IMR-90 (cell line): ENCODE measurements at regions of chr5 and their contacts with region 1.

Region 1: DNA sequence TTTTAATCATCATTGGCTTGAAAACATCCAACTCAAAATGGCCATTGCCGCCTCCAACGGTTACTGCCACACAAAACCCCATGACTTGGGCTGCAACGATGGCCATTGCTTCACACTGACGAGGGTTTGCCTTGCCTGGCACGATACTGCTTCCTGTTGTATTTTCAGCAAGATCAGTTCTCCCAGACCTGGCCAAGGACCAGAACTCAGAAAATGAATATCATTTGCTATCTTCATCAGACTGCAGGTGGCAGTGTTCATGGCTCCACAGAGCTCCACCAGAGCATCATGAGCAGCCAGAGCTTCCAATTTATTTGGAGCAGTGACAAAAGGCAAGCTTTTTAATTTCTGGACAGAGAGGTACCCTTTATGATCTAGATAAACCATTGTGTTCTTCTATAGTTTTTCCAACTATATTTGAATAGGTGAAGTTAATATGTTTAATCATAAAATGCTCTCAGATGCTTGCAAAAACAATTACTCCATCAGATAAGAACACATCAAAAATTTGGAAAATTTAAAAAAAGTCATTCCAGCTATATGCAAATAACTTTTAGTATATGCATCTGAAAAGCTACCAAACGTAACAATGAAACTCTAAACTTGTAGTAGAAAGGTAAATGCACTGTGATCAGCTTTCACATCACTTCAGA is 10.4 kb downstream of the AMACR start:
- DNase-seq: peak; percentile 88
- ATAC-seq: peak; percentile 81
- H3K4me3 ChIP-seq: no peak overlapping the region
- H3K27ac ChIP-seq: no peak overlapping the region
- H3K4me1 ChIP-seq: peaks cover 8% of the 10 kb centered on the region; the same call in 1 of the 2 replicates
- H3K27me3 ChIP-seq: no peaks in the 10 kb centered on the region
- CTCF ChIP-seq: peak; percentile 76
- POLR2A ChIP-seq: no peak
- RAD21 ChIP-seq: peak; percentile 81

Region 2: DNA sequence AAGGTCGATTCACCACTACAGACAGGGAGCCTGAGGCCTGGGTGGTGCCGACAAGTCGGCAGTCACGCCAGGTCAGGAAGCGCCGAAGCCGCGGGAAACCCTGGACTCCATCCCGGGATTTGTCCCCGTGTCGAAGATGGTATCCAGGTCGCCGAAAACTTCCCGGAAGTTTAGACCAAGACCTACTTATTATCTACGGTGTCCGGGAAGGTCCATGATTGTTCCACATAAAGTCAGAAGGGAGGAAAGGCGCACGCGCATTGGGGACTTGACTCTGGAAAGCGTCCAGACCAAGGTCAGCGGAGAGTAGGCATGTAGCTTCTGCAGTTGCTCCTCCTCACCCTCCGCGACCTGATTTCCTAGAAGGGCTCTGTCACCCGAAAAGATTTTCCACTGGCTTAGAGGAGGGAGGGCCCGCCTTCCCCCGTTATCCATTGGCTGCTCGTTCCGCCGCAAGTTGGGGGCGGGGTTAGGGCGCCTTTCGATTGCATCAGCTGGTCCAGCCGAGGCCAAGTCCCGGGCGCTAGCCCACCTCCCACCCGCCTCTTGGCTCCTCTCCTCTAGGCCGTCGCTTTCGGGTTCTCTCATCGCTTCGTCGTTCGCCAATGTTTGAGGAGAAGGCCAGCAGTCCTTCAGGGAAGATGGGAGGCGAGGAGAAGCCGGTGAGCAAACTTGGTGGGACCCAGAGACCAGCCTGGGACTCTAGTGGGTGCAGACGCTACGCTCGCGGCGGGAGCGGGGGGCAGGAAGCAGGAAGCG is 556.8 kb before region 1 on chr5 and contains the start of gene TARS1:
- CTCF ChIA-PET with region 1: no interaction called
- POLR2A ChIA-PET with region 1: no interaction called
- dilution Hi-C with region 1: no loop called
- in situ Hi-C with region 1: no loop called
- intact Hi-C with region 1: loop called (anchors 1 kb)
- DNase-seq: peak; percentile 100
- ATAC-seq: peak; percentile 94
- H3K4me3 ChIP-seq: peak within 1 kb of the TSS; percentile 68
- H3K27ac ChIP-seq: peak within 1 kb of the TSS; percentile 97
- H3K4me1 ChIP-seq: peaks cover 2% of the 10 kb centered on the region; the same call in 1 of the 2 replicates
- H3K27me3 ChIP-seq: no peaks in the 10 kb centered on the region
- CTCF ChIP-seq: no peak
- POLR2A ChIP-seq: peak; percentile 91
- RAD21 ChIP-seq: no peak
- total RNA-seq, gene TARS1: 175 and 219 TPM in 2 replicates

Region 3: GRCh38 chr5:33867241-33867640 is 130.2 kb before region 1 on chr5:
- CTCF ChIA-PET with region 1: no interaction called
- POLR2A ChIA-PET with region 1: no interaction called
- dilution Hi-C with region 1: no loop called
- in situ Hi-C with region 1: no loop called
- intact Hi-C with region 1: no loop called
- DNase-seq: peak; percentile 36
- ATAC-seq: no peak
- H3K4me3 ChIP-seq: no peak overlapping the region
- H3K27ac ChIP-seq: no peak overlapping the region
- H3K4me1 ChIP-seq: no peaks in the 10 kb centered on the region
- H3K27me3 ChIP-seq: no peaks in the 10 kb centered on the region
- CTCF ChIP-seq: no peak
- POLR2A ChIP-seq: no peak
- RAD21 ChIP-seq: no peak

Region 4: GRCh38 chr5:34452170-34452830 is 454.8 kb after region 1 on chr5:
- CTCF ChIA-PET with region 1: interaction called, 7 read pairs
- POLR2A ChIA-PET with region 1: no interaction called
- dilution Hi-C with region 1: no loop called
- in situ Hi-C with region 1: no loop called
- intact Hi-C with region 1: loop called (anchors 1 kb)
- DNase-seq: peak; percentile 52
- ATAC-seq: no peak; the same call in 1 of the 2 replicates
- H3K4me3 ChIP-seq: no peak overlapping the region
- H3K27ac ChIP-seq: no peak overlapping the region
- H3K4me1 ChIP-seq: no peaks in the 10 kb centered on the region
- H3K27me3 ChIP-seq: peaks cover 34% of the 10 kb centered on the region
- CTCF ChIP-seq: peak; percentile 68
- POLR2A ChIP-seq: no peak
- RAD21 ChIP-seq: peak; percentile 78

Region 5: DNA sequence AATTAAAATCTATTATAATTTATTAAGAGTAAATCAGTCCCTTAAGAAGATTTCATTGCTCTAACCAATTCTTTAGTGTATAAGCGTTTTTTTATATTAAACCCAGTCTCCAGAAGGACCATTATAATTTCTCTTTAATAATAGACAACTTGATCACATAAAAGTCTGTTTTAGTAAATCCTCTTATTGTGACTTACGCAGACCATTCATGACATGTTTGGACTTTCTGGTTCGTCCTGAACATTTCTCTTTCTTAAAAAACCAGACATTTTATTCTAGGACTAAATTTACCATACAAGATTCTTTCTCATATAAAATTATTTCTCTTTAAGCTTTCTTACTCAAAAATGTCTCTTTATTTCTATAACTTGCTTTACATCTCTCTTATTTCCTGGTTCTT is 462.5 kb after region 1 on chr5:
- CTCF ChIA-PET with region 1: interaction called, 6 read pairs
- POLR2A ChIA-PET with region 1: no interaction called
- dilution Hi-C with region 1: no loop called
- in situ Hi-C with region 1: loop called (anchors 5 kb)
- intact Hi-C with region 1: loop called (anchors 1 kb)
- DNase-seq: no peak
- ATAC-seq: no peak
- H3K4me3 ChIP-seq: no peak overlapping the region
- H3K27ac ChIP-seq: no peak overlapping the region
- H3K4me1 ChIP-seq: 0 out of 2 replicates have a peak, but pooled peaks cover under 1% of the 10 kb centered on the region
- H3K27me3 ChIP-seq: no peaks in the 10 kb centered on the region
- CTCF ChIP-seq: no peak
- POLR2A ChIP-seq: no peak
- RAD21 ChIP-seq: no peak